ENCODE measurements at regions of chr19 and their contacts with region 1.

Region 1: DNA sequence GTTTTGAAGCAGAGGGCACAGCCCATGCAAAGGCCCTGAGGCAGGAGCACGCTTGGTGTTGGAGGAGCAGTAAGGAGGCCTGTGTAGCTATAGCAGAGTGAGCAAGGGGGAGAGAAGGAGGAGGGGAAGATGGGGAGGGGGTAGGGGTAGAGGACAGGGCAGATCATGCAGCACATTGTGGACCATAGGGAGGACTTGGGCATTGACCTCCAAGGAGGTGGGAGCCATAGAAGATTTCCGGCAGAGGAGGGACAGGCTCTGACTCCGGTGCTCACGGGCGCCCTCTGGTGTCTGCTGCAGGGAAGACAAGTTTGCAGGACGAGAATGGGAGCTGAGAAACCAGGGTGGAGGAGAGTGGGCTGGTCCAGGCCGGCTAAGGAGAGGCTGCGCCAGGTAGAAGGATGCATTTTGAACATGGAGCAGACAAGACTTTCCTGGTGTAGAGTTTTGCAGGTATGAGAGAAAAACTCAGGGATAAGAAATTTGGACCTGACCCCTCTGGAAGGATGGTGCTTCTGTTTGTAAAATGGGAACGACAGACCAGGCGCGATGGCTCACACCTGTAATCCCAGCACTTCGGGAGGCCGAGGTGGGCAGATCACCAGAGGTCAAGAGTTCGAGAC is 13.7 kb upstream of the CREB3L3 start:
- DNase-seq: peak; percentile 52 to 78
- H3K4me3 ChIP-seq: no peak overlapping the region
- H3K27ac ChIP-seq: no peak overlapping the region
- H3K4me1 ChIP-seq: peaks cover 3% of the 10 kb centered on the region
- H3K27me3 ChIP-seq: no peaks in the 10 kb centered on the region
- CTCF ChIP-seq: peak; percentile 78

Region 2: GRCh38 chr19:3970808-3971598 is 168.7 kb before region 1 on chr19 and contains the start of gene DAPK3:
- CTCF ChIA-PET with region 1: interaction called, 10 read pairs
- POLR2A ChIA-PET with region 1: no interaction called
- intact Hi-C with region 1: no loop called
- DNase-seq: peak; percentile 89 to 95
- H3K4me3 ChIP-seq: peak within 1 kb of the TSS; percentile 81
- H3K27ac ChIP-seq: peak within 1 kb of the TSS; percentile 90
- H3K4me1 ChIP-seq: peaks cover 20% of the 10 kb centered on the region
- H3K27me3 ChIP-seq: no peaks in the 10 kb centered on the region
- CTCF ChIP-seq: no peak
- total RNA-seq, gene DAPK3: 38.1 and 46.5 TPM in 2 replicates

Region 3: DNA sequence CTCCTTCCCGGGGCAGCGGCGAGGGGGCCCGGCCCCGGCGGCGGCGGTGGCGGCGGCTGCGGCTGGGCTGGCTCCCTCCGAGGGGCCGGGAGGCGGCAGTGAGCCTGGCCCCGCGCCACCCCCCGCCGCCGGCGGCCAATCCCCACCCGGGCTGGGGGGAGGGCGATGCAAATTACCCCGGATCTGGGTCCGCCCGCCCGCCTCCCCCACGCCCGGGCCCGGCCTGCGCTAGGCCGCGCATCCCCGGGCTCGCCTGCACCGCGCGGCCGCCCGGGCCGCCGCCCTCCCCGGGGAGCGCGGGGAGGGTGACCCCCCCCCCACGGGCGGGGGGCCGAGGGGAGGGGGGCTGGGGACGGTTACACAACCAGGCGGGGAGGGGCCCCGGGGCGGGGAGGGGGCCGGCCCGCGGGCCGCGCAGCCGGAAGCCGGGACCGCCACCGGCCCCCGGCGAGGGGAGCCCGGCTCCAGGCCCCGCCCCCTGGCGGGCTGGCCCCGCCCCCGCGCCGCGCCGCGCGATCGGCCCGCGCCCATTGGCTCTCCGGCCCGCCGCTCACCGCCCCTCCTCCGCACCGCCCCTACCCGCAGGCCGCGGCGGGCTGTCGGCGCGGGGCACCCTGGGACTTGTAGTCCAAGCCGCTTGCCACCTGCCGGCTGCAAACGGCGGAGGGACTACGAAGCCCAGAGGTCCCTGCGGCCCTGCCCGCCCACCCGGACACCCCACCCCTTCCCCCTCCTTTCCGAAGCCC is 74.1 kb before region 1 on chr19:
- CTCF ChIA-PET with region 1: interaction called, 3 read pairs
- POLR2A ChIA-PET with region 1: no interaction called
- intact Hi-C with region 1: loop called (anchors 10 kb)
- DNase-seq: peak; percentile 81 to 94
- H3K4me3 ChIP-seq: no peak overlapping the region
- H3K27ac ChIP-seq: no peak overlapping the region
- H3K4me1 ChIP-seq: peaks cover 30% of the 10 kb centered on the region
- H3K27me3 ChIP-seq: no peaks in the 10 kb centered on the region
- CTCF ChIP-seq: no peak

Region 4: GRCh38 chr19:4164262-4164661 is 24.5 kb after region 1 on chr19:
- CTCF ChIA-PET with region 1: no interaction called
- POLR2A ChIA-PET with region 1: interaction called, 10 read pairs
- intact Hi-C with region 1: no loop called
- DNase-seq: no peak
- H3K4me3 ChIP-seq: no peak overlapping the region
- H3K27ac ChIP-seq: no peak overlapping the region
- H3K4me1 ChIP-seq: no peaks in the 10 kb centered on the region
- H3K27me3 ChIP-seq: peaks cover 4% of the 10 kb centered on the region
- CTCF ChIP-seq: no peak

Region 5: DNA sequence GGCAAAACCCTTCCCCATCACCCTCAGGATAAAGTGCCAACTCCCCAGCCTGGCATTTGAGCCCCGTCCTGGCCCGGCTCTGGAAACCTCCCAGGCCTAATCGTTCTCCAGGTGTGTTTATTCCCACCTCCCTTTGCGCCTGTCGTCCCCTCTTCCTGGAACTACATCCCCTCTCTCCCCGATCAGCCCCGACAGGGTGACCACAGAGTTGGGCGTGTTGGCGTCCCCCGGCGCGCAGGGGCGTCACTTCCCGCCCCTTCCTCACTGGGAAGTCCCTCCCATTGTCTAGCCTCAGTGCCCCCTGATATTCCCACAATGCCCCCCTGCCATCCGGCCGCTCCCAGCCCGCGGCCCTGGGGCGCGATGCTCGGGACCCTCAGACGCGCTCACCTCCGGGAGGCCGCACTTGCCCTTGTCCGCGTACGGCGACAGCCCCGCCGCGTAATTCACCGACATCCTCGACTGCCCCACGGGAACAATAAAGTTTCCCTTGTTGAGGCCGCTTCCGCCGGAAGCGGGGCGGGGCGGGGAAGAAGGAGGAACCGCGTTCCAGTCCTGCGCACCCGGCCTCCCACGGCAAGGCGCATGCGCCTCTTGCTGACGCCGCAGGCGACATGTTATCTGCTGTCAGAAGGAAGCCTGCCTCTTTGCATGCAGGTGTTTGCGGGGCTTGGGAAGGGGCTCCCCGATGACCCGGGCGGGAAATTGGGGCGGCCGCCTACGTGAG is 42.5 kb after region 1 on chr19 and contains the starts of genes ANKRD24 and SIRT6:
- CTCF ChIA-PET with region 1: interaction called, 9 read pairs
- POLR2A ChIA-PET with region 1: no interaction called
- intact Hi-C with region 1: loop called (anchors 5 kb)
- DNase-seq: peak; percentile 82 to 89
- H3K4me3 ChIP-seq: peak within 1 kb of the TSS; percentile 91
- H3K27ac ChIP-seq: peak within 1 kb of the TSS; percentile 38; the same call in 1 of the 2 replicates
- H3K4me1 ChIP-seq: peaks cover 4% of the 10 kb centered on the region; the same call in 1 of the 2 replicates
- H3K27me3 ChIP-seq: no peaks in the 10 kb centered on the region
- CTCF ChIP-seq: no peak
- total RNA-seq, gene ANKRD24: 0.79 and 1.0 TPM in 2 replicates
- total RNA-seq, gene SIRT6: 22.2 and 23.2 TPM in 2 replicates

Region 6: GRCh38 chr19:4199699-4200293 is 60.1 kb after region 1 on chr19:
- CTCF ChIA-PET with region 1: no interaction called
- POLR2A ChIA-PET with region 1: no interaction called
- intact Hi-C with region 1: loop called (anchors 5 kb)
- DNase-seq: no peak
- H3K4me3 ChIP-seq: no peak overlapping the region
- H3K27ac ChIP-seq: no peak overlapping the region
- H3K4me1 ChIP-seq: no peaks in the 10 kb centered on the region
- H3K27me3 ChIP-seq: no peaks in the 10 kb centered on the region
- CTCF ChIP-seq: peak; percentile 57